ENCODE measurements at regions of chr1 and their contacts with region 1.

Region 1: GRCh38 chr1:153352523-153352922 is 3.9 kb upstream of the PGLYRP4 start:
- DNase-seq: peak in 1 of 2 experiments; percentile 65
- H3K4me3 ChIP-seq: no peak overlapping the region
- H3K27ac ChIP-seq: no peak overlapping the region
- H3K4me1 ChIP-seq: no peaks in the 10 kb centered on the region; a peak in 1 of 7 replicates
- H3K27me3 ChIP-seq: no peaks in the 10 kb centered on the region
- CTCF ChIP-seq: peak; percentile 84 to 85 (median 84)
- EP300 ChIP-seq: no peak
- POLR2A ChIP-seq: no peak
- RAD21 ChIP-seq: peak; percentile 91 to 92

Region 2: DNA sequence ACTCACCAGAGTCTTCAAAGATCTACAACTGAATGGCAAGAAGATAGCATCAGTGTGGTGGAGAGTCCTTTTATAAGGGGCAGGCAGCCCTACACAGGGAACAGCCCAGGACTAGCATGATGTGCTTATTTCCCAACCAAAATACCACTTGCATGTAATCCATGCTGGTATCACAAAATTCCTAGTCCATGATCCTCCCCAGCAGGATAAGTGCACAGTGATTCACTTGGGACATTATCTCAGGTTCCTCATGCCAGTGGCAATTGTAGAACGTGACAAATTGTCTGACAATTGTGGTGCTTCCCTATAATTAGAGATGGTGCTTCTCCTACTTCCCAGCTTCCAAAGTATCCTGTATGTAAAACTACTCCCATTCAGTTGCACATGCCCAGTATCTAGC is 201.7 kb before region 1 on chr1 and contains the start of gene SPRR2G:
- CTCF ChIA-PET with region 1: no interaction called
- POLR2A ChIA-PET with region 1: no interaction called
- DNase-seq: no peak
- H3K4me3 ChIP-seq: no peak within 1 kb of the TSS
- H3K27ac ChIP-seq: no peak within 1 kb of the TSS
- H3K4me1 ChIP-seq: no peaks in the 10 kb centered on the region
- H3K27me3 ChIP-seq: no peaks in the 10 kb centered on the region; a peak in 2 of 7 replicates
- CTCF ChIP-seq: no peak
- EP300 ChIP-seq: no peak
- POLR2A ChIP-seq: no peak
- RAD21 ChIP-seq: no peak
- total RNA-seq, gene SPRR2G: not detected in 2 replicates

Region 3: GRCh38 chr1:153231363-153231762 is 121.2 kb before region 1 on chr1:
- CTCF ChIA-PET with region 1: no interaction called
- POLR2A ChIA-PET with region 1: no interaction called
- DNase-seq: no peak
- H3K4me3 ChIP-seq: no peak overlapping the region
- H3K27ac ChIP-seq: no peak overlapping the region
- H3K4me1 ChIP-seq: no peaks in the 10 kb centered on the region
- H3K27me3 ChIP-seq: no peaks in the 10 kb centered on the region
- CTCF ChIP-seq: no peak
- EP300 ChIP-seq: no peak
- POLR2A ChIP-seq: no peak
- RAD21 ChIP-seq: no peak

Region 4: DNA sequence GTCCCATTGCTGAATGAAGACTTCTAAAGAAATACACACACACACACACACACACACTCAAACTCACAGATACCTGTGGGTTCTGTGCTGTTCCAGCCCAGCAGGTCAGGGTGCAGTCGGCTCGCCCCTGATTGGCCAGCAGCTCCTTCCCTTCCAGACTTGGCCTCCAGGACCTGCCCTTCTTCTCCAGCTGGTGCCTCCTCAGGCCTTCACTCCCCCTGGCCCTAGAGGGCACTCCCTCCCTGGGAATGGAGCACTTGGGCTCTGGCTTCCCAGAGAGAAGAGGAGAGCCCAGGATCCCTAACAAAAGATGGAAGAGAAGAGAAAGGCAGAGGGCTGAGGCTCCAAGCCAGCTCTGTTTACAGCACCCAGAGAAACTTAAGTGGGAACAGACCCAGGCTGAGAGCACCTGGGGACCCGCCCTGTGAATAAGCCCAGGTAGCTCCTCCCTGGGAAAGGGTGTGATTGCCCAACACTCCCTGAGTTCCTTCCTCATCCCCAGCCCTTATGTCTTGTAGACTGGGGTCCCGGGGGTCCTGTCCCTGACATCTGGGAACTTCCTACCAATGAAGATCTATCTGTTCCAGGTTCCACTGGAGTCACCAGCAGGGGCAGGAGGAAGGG is 39.8 kb before region 1 on chr1 and contains the start of gene PGLYRP3:
- CTCF ChIA-PET with region 1: interaction called, 18 read pairs
- POLR2A ChIA-PET with region 1: no interaction called
- DNase-seq: no peak
- H3K4me3 ChIP-seq: no peak within 1 kb of the TSS
- H3K27ac ChIP-seq: no peak within 1 kb of the TSS
- H3K4me1 ChIP-seq: no peaks in the 10 kb centered on the region
- H3K27me3 ChIP-seq: no peaks in the 10 kb centered on the region
- CTCF ChIP-seq: peak; percentile 12 to 20 (median 15); a peak in 2 of 4 replicates
- EP300 ChIP-seq: no peak
- POLR2A ChIP-seq: no peak
- RAD21 ChIP-seq: peak; percentile 31 to 47; a peak in 3 of 4 replicates
- total RNA-seq, gene PGLYRP3: not detected in 2 replicates

Region 5: DNA sequence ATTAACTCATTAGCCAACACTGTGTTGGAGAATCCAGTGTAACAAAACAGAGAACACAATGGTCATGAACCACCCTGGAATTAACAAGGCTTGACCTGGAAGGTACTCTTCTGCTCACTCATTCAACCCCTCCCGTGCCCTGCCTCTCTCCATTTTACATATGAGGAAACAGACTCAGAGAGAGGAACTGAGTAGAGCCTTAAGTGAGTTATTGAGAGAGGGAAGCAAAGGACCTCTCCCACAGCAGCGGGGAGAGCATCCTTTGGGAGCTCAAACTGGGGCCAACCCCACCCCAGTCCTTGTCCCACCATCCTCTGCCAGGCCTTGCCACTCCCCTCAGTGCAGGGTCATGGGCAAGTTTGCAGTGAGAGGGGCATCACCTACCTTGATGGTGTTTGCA is 21.5 kb after region 1 on chr1:
- CTCF ChIA-PET with region 1: interaction called, 19 read pairs
- POLR2A ChIA-PET with region 1: no interaction called
- DNase-seq: no peak
- H3K4me3 ChIP-seq: no peak overlapping the region
- H3K27ac ChIP-seq: no peak overlapping the region
- H3K4me1 ChIP-seq: no peaks in the 10 kb centered on the region
- H3K27me3 ChIP-seq: no peaks in the 10 kb centered on the region; a peak in 1 of 7 replicates
- CTCF ChIP-seq: no peak
- EP300 ChIP-seq: no peak
- POLR2A ChIP-seq: no peak
- RAD21 ChIP-seq: no peak

Region 6: GRCh38 chr1:153428790-153429189 is 76.3 kb after region 1 on chr1:
- CTCF ChIA-PET with region 1: interaction called, 15 read pairs
- POLR2A ChIA-PET with region 1: no interaction called
- DNase-seq: peak in 1 of 2 experiments; percentile 46
- H3K4me3 ChIP-seq: no peak overlapping the region
- H3K27ac ChIP-seq: no peak overlapping the region
- H3K4me1 ChIP-seq: no peaks in the 10 kb centered on the region; a peak in 2 of 7 replicates
- H3K27me3 ChIP-seq: no peaks in the 10 kb centered on the region
- CTCF ChIP-seq: peak; percentile 43 to 63 (median 45)
- EP300 ChIP-seq: no peak
- POLR2A ChIP-seq: no peak
- RAD21 ChIP-seq: peak; percentile 37 to 57; a peak in 3 of 4 replicates

Region 7: GRCh38 chr1:153494976-153495535 is 142.5 kb after region 1 on chr1:
- CTCF ChIA-PET with region 1: interaction called, 360 read pairs
- POLR2A ChIA-PET with region 1: no interaction called
- DNase-seq: peak; percentile 82 to 100
- H3K4me3 ChIP-seq: no peak overlapping the region
- H3K27ac ChIP-seq: 0 out of 2 replicates have a peak overlapping the region, but pooled peaks have one; percentile 38
- H3K4me1 ChIP-seq: peaks cover 0 to 6% (median 2%) of the 10 kb centered on the region in 4 experiments; a peak in 4 of 7 replicates
- H3K27me3 ChIP-seq: no peaks in the 10 kb centered on the region
- CTCF ChIP-seq: peak; percentile 80 to 94 (median 92)
- EP300 ChIP-seq: peak in 1 of 2 experiments; percentile 66; a peak in 2 of 3 replicates
- POLR2A ChIP-seq: no peak
- RAD21 ChIP-seq: peak; percentile 88 to 97

Region 8: DNA sequence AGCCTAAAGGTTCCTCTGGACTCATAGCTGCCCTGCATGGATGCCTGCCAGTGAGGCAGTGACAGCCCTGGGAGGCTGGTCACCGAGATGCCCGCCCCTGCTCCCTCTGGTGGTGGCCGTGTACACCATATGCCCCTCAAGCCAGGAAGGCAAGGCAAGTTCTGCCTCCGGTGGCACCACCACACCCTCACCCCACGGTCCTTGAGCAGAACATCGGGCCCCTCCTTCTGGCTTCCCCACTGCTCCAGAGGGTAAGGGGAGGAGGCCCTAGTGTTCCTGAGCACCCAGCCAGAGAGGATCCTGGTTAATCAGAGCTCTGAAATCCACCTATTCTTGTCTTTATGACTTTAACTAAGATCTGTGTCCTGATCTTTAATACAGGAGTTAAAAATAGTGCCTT is 265.2 kb after region 1 on chr1:
- CTCF ChIA-PET with region 1: interaction called, 10 read pairs
- POLR2A ChIA-PET with region 1: no interaction called
- DNase-seq: peak; percentile 54 to 89
- H3K4me3 ChIP-seq: no peak overlapping the region
- H3K27ac ChIP-seq: no peak overlapping the region
- H3K4me1 ChIP-seq: peaks cover 0 to 13% (median 5%) of the 10 kb centered on the region in 4 experiments; a peak in 6 of 7 replicates
- H3K27me3 ChIP-seq: no peaks in the 10 kb centered on the region
- CTCF ChIP-seq: peak; percentile 93 to 99 (median 94)
- EP300 ChIP-seq: no peak
- POLR2A ChIP-seq: no peak
- RAD21 ChIP-seq: peak; percentile 67 to 83